ENCODE measurements at regions of chr5 and their contacts with region 1.

Region 1: GRCh38 chr5:154754460-154755360 is 467 bp upstream of the LARP1 start:
- DNase-seq: peak; percentile 100
- H3K4me3 Mint-ChIP-seq: peak overlapping the region; percentile 82
- H3K27ac Mint-ChIP-seq: peak overlapping the region; percentile 98
- H3K4me1 Mint-ChIP-seq: peaks cover 33% of the 10 kb centered on the region
- H3K27me3 Mint-ChIP-seq: no peaks in the 10 kb centered on the region
- CTCF ChIP-seq: peak; percentile 34

Region 2: DNA sequence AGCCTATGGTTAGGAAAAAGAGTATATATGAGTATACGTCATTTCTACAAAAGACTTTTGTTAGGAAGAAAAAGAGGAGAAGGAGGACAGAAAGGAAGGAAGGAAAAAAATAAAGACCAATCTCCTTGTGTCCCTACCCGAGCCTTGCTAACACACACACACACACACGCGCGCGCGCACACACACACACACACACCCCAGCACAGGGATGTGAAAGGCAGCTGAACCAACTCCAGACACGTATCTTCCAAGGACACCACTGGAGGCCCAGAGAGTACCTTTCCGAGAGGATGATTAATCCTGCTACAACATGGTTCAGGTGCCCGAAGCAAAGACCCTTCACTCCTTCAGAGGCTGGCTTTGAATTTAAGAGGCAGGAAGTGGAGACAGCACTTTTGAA is 621.1 kb before region 1 on chr5:
- CTCF ChIA-PET with region 1: no interaction called
- POLR2A ChIA-PET with region 1: no interaction called
- intact Hi-C with region 1: no loop called
- DNase-seq: no peak
- H3K4me3 Mint-ChIP-seq: no peak overlapping the region
- H3K27ac Mint-ChIP-seq: no peak overlapping the region
- H3K4me1 Mint-ChIP-seq: no peaks in the 10 kb centered on the region
- H3K27me3 Mint-ChIP-seq: peaks cover 55% of the 10 kb centered on the region
- CTCF ChIP-seq: no peak

Region 3: GRCh38 chr5:154697371-154697770 is 57.3 kb before region 1 on chr5:
- CTCF ChIA-PET with region 1: interaction called, 3 read pairs
- POLR2A ChIA-PET with region 1: interaction called, 15 read pairs
- intact Hi-C with region 1: no loop called
- DNase-seq: no peak
- H3K4me3 Mint-ChIP-seq: no peak overlapping the region
- H3K27ac Mint-ChIP-seq: no peak overlapping the region
- H3K4me1 Mint-ChIP-seq: peaks cover 11% of the 10 kb centered on the region
- H3K27me3 Mint-ChIP-seq: no peaks in the 10 kb centered on the region
- CTCF ChIP-seq: no peak

Region 4: GRCh38 chr5:154767576-154767975 is 12.9 kb after region 1 on chr5:
- CTCF ChIA-PET with region 1: interaction called, 3 read pairs
- POLR2A ChIA-PET with region 1: interaction called, 28 read pairs
- intact Hi-C with region 1: no loop called
- DNase-seq: no peak
- H3K4me3 Mint-ChIP-seq: no peak overlapping the region
- H3K27ac Mint-ChIP-seq: no peak overlapping the region
- H3K4me1 Mint-ChIP-seq: peaks cover 58% of the 10 kb centered on the region
- H3K27me3 Mint-ChIP-seq: no peaks in the 10 kb centered on the region
- CTCF ChIP-seq: no peak

Region 5: DNA sequence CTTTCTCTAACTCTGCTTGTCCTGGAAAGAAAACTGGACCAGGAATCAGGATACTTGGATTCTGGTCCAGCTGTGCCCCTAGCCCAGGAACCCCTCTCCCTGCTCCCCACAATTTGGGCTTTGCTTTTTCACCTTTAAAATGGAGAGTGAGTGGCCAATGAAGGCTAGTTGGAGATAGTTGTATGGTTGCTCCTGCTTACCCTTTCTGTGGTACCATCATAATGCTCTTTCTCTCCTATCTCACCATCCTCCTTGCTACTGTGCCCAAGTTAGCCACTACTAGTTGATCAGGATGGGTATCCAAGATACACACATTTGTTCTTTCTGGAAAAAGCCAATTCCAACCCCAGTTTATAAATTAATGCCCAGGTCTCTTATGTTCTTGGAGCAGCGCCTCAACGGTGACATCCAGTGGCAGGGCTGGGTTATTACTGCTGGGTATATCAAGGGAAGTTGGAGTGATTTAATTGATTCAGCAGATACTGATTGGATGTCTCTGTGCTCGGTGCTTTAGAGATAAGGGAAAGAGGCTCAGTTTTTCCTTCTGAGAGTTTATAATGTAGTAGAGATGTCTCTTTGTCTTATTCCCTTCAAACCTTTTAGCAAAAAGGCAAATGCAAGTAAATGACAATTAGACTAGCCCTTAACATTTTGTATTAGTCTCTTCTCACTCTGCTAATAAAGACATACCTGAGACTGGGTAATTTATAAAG is 57.1 kb after region 1 on chr5:
- CTCF ChIA-PET with region 1: no interaction called
- POLR2A ChIA-PET with region 1: interaction called, 3 read pairs
- intact Hi-C with region 1: loop called (anchors 1 kb)
- DNase-seq: peak; percentile 77
- H3K4me3 Mint-ChIP-seq: no peak overlapping the region
- H3K27ac Mint-ChIP-seq: peak overlapping the region; percentile 4
- H3K4me1 Mint-ChIP-seq: peaks cover 15% of the 10 kb centered on the region
- H3K27me3 Mint-ChIP-seq: no peaks in the 10 kb centered on the region
- CTCF ChIP-seq: peak; percentile 94

Region 6: DNA sequence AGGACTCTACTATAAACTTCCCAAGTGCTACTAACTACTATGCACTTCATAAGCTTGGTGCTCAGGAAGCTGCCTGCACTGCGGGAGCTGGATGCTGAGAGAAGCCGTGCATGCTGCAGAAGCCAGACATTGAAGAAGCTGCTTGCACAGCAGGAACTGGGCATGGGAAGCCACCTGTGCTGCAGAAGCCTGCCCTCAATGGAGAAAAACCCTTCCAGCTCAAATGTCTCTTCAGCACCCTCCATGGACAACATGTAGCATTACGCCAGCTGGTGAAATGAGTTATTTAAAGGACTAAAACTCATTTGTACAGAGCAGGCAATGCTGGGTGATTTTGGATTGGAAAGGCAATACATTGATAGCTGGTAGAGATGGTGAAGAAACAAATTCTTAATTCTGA is 506.1 kb after region 1 on chr5:
- CTCF ChIA-PET with region 1: no interaction called
- POLR2A ChIA-PET with region 1: no interaction called
- intact Hi-C with region 1: no loop called
- DNase-seq: peak; percentile 16
- H3K4me3 Mint-ChIP-seq: no peak overlapping the region
- H3K27ac Mint-ChIP-seq: no peak overlapping the region
- H3K4me1 Mint-ChIP-seq: no peaks in the 10 kb centered on the region
- H3K27me3 Mint-ChIP-seq: no peaks in the 10 kb centered on the region
- CTCF ChIP-seq: peak; percentile 33